ENCODE measurements at regions of chr4 and their contacts with region 1.

Region 1: DNA sequence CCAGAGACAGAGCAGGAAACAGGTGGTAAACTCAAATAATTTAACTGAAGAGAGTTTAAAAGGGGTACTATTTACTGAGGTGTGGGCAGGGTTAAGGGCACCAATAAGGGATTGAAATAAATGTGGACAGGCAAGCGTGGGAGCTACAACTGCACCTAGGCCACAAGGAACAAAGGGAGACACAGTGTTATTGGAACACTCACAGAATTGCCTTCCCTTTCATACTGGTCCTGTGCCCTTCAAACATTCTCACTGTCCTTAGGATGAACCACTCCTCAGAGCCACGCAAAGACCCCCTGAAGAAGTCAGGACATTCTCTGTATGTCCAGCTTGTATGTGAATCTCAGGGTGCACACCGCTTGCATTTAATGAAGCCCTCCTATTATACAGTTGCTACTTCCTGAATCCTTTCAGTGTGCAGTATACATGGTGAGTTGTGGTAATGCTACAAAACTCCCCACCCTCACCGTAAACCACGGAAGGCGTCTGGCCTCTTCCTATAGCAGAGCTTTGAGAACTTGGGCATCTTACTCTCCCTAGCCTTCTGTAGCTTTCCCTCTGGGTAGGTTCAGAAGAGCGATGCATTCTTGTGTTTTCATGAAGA is 9.6 kb upstream of the MRPL1 start:
- DNase-seq: peak; percentile 58
- ATAC-seq: peak; percentile 91
- H3K4me3 Mint-ChIP-seq: peak overlapping the region; percentile 72
- H3K27ac Mint-ChIP-seq: peak overlapping the region; percentile 93
- H3K4me1 Mint-ChIP-seq: peaks cover 48% of the 10 kb centered on the region
- H3K27me3 Mint-ChIP-seq: no peaks in the 10 kb centered on the region

Region 2: DNA sequence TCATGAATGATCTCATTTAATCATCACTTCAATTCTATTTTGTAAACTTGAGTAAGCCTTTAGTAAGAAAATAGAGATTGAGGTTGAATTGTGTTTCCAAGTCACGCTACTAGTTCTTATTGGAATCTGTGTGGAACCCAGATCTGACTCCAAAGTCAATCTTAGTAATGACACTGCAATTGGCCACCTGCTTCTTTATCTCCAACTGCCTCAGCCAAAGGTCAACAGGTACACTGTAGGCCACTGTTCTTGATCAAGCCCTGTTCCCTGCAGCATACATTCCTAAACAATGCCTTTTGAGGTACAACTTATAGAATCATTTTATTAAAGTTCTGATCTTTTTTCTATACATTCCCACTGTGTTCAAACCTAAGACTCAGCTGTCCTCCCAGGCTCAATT is 292.8 kb before region 1 on chr4:
- POLR2A ChIA-PET with region 1: no interaction called
- DNase-seq: no peak
- ATAC-seq: no peak
- H3K4me3 Mint-ChIP-seq: no peak overlapping the region
- H3K27ac Mint-ChIP-seq: no peak overlapping the region
- H3K4me1 Mint-ChIP-seq: no peaks in the 10 kb centered on the region
- H3K27me3 Mint-ChIP-seq: peaks cover 5% of the 10 kb centered on the region

Region 3: GRCh38 chr4:77819843-77820648 is 32.9 kb before region 1 on chr4:
- POLR2A ChIA-PET with region 1: interaction called, 330 read pairs
- DNase-seq: peak; percentile 98
- ATAC-seq: peak; percentile 76
- H3K4me3 Mint-ChIP-seq: peak overlapping the region; percentile 91
- H3K27ac Mint-ChIP-seq: peak overlapping the region; percentile 90
- H3K4me1 Mint-ChIP-seq: peaks cover 41% of the 10 kb centered on the region
- H3K27me3 Mint-ChIP-seq: no peaks in the 10 kb centered on the region

Region 4: GRCh38 chr4:77827343-77827742 is 25.7 kb before region 1 on chr4:
- POLR2A ChIA-PET with region 1: interaction called, 330 read pairs
- DNase-seq: no peak
- ATAC-seq: peak; percentile 85
- H3K4me3 Mint-ChIP-seq: peak overlapping the region; percentile 52
- H3K27ac Mint-ChIP-seq: peak overlapping the region; percentile 79
- H3K4me1 Mint-ChIP-seq: peaks cover 25% of the 10 kb centered on the region
- H3K27me3 Mint-ChIP-seq: no peaks in the 10 kb centered on the region

Region 5: GRCh38 chr4:78155616-78156105 is 302.7 kb after region 1 on chr4:
- POLR2A ChIA-PET with region 1: no interaction called
- DNase-seq: no peak
- ATAC-seq: no peak
- H3K4me3 Mint-ChIP-seq: no peak overlapping the region
- H3K27ac Mint-ChIP-seq: no peak overlapping the region
- H3K4me1 Mint-ChIP-seq: no peaks in the 10 kb centered on the region
- H3K27me3 Mint-ChIP-seq: peaks cover 25% of the 10 kb centered on the region